ENCODE measurements at regions of chr7 and their contacts with region 1.

Region 1: GRCh38 chr7:73606801-73607691 is 17.3 kb downstream of the MLXIPL start:
- DNase-seq: peak; percentile 10
- ATAC-seq: peak; percentile 84
- H3K4me3 ChIP-seq: no peak overlapping the region
- H3K27ac ChIP-seq: no peak overlapping the region
- H3K4me1 ChIP-seq: no peaks in the 10 kb centered on the region
- H3K27me3 ChIP-seq: peaks cover 13% of the 10 kb centered on the region; the same call in 1 of the 2 replicates
- CTCF ChIP-seq: peak; percentile 89
- POLR2A ChIP-seq: no peak
- RAD21 ChIP-seq: peak; percentile 87

Region 2: DNA sequence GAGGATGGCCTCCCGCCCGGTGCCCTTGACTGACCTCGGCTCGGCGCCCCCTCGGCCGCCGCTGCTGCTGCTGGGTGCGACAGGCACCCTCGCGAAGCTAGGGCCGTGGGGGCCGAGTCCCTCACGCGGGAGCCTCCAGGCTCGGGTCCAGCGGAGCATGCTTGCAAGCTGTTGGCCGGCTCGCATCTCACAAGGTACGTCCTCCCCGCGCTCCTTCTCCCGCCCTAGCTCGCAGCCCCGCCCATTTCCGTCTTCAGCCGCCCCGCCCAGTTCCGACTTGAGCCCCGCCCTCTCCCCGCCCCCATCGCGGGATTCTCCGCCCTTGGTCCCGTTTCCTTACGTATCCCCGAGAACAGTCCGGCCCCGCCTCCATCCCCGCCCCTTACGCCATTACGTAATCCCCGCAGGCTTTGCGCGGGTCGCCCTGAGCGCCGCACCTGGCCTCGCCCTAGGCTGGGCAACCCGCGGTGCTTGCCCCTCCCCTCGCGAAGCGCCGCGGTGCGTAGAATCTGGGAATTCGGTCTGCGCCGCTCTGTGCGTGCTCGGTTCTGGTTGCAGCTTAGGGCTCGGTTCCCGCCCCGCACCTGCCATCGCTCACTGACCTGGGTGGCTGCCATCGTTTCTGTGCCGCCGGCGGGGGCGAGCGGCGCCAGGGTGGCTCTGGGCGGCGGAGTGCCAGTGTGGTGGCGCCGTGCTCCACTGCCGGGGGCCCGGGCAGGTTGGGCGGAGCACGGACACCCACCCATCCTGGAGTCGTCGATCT is 131.7 kb after region 1 on chr7 and contains the start of gene ABHD11:
- CTCF ChIA-PET with region 1: no interaction called
- POLR2A ChIA-PET with region 1: no interaction called
- dilution Hi-C with region 1: no loop called
- in situ Hi-C with region 1: loop called (anchors 5 kb)
- intact Hi-C with region 1: no loop called
- DNase-seq: peak; percentile 93
- ATAC-seq: peak; percentile 94
- H3K4me3 ChIP-seq: peak within 1 kb of the TSS; percentile 99
- H3K27ac ChIP-seq: peak within 1 kb of the TSS; percentile 69
- H3K4me1 ChIP-seq: peaks cover 7% of the 10 kb centered on the region
- H3K27me3 ChIP-seq: no peaks in the 10 kb centered on the region
- CTCF ChIP-seq: no peak
- POLR2A ChIP-seq: 0 out of 2 replicates have a peak, but pooled peaks have one; percentile 40
- RAD21 ChIP-seq: no peak
- total RNA-seq, gene ABHD11: 13.4 and 14.2 TPM in 2 replicates